Tibial artery (tissue), 4 donors: ENCODE measurements at regions of chr14 and their contacts with region 1.

Region 1: DNA sequence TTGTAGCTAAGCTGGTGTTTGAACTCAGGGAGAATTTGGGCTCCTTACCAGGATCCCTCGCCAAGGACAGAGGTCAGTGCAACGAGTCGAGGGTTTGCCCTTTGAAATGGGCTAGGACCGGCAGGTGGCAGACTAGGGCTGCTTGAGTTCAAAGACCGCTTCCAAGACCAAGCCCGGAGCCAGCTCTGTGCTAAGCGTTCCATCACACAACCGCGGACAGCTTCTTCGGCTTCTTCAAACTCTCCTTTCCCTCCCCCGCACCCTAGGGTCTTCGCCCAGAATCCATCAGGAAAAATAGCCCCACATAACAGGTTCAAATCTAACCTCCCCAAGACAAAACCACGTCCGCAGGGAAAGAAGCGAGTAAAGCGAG is 705 bp upstream of the FLVCR2 start:
- DNase-seq: peak; percentile 90 to 91
- H3K4me3 ChIP-seq: peak overlapping the region; percentile 54 to 63
- H3K27ac ChIP-seq: peak overlapping the region; percentile 63 to 80
- H3K4me1 ChIP-seq: peaks cover 0 to 22% (median 14%) of the 10 kb centered on the region in 4 donors
- H3K27me3 ChIP-seq: no peaks in the 10 kb centered on the region
- CTCF ChIP-seq: peak; percentile 75 to 77

Region 2: DNA sequence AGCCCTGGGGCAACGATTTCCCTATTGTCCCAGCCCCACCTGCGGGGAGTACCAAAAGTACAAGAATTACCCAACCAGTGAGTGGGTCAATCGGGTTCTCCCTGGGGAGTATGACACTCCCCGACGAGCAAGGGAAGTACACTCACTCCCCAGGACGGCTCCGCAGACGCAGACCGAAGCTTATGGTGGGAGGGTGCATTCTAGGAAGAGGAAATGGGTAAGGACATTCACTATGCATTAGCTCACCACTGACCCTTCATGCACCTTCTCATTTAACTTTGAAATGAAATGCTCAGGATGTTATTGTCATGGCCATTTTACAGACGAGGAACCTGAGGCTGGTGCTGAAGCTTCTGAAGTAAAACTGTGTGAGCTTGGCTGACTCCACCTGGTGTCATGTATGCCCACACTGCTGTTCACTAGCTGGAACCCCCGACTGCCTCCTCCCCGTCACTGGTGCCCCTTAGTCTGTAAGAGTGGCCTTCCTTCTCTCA is 355.5 kb before region 1 on chr14:
- intact Hi-C with region 1: no loop called
- DNase-seq: peak; percentile 58 to 73
- H3K4me3 ChIP-seq: no peak overlapping the region
- H3K27ac ChIP-seq: no peak overlapping the region
- H3K4me1 ChIP-seq: no peaks in the 10 kb centered on the region
- H3K27me3 ChIP-seq: no peaks in the 10 kb centered on the region
- CTCF ChIP-seq: no peak

Region 3: GRCh38 chr14:75510547-75510946 is 67.2 kb before region 1 on chr14:
- intact Hi-C with region 1: no loop called
- DNase-seq: no peak
- H3K4me3 ChIP-seq: no peak overlapping the region
- H3K27ac ChIP-seq: no peak overlapping the region
- H3K4me1 ChIP-seq: peaks cover 0 to 7% (median 4%) of the 10 kb centered on the region in 4 donors
- H3K27me3 ChIP-seq: no peaks in the 10 kb centered on the region
- CTCF ChIP-seq: no peak

Region 4: DNA sequence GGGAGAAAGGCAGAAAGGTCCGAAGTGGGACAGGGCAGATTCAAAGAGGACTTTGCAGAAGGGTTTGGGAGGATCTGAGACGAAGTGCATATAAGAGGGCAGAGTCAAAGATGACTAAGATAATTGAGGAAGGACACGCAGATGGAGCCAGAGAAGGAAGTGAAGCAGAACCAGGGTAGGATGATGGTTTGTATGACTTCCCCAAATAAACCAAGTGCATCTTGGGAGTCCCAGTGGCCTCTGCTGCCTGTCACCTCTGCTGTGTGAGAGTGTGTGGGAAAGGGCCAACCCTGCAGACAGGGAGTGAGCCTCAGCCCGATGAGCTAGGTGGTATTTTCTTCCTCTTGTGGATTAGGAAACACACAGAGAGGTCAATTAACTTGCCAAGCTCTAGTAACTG is 37.5 kb after region 1 on chr14:
- intact Hi-C with region 1: no loop called
- DNase-seq: peak in 1 of 2 donors; percentile 35
- H3K4me3 ChIP-seq: no peak overlapping the region
- H3K27ac ChIP-seq: no peak overlapping the region
- H3K4me1 ChIP-seq: peaks cover 0 to 7% (median 3%) of the 10 kb centered on the region in 4 donors
- H3K27me3 ChIP-seq: peaks cover 0 to 4% of the 10 kb centered on the region in 2 donors
- CTCF ChIP-seq: no peak

Region 5: DNA sequence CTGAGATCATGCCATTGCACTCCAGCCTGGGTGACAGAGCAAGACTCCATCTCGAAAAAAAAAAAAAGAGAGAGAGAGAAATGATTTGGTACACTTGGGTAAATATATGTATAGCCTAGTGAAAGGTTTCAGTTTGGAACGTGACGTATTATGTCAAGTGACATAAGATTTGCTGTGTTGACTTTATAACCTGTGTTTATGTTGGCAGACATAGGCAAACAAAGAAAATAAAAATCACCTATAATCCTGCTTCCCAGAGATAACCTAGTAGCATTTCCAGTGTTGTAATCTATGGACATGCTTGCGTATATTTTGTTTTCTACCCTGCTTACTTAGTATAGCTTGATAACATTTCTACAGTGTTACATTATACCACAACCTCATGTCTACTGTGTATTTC is 66.3 kb after region 1 on chr14:
- intact Hi-C with region 1: no loop called
- DNase-seq: no peak
- H3K4me3 ChIP-seq: no peak overlapping the region
- H3K27ac ChIP-seq: no peak overlapping the region
- H3K4me1 ChIP-seq: peaks cover 0 to 17% (median 4%) of the 10 kb centered on the region in 4 donors
- H3K27me3 ChIP-seq: no peaks in the 10 kb centered on the region
- CTCF ChIP-seq: no peak

Region 6: GRCh38 chr14:75654127-75654732 is 76.5 kb after region 1 on chr14:
- intact Hi-C with region 1: loop called (anchors 2 kb)
- DNase-seq: peak; percentile 70 to 86
- H3K4me3 ChIP-seq: no peak overlapping the region
- H3K27ac ChIP-seq: no peak overlapping the region
- H3K4me1 ChIP-seq: peaks cover 0 to 3% (median 0%) of the 10 kb centered on the region in 4 donors
- H3K27me3 ChIP-seq: no peaks in the 10 kb centered on the region
- CTCF ChIP-seq: peak; percentile 92 to 95